MCF 10A (cell line): ENCODE measurements at regions of chr10 and their contacts with region 1.

Region 1: DNA sequence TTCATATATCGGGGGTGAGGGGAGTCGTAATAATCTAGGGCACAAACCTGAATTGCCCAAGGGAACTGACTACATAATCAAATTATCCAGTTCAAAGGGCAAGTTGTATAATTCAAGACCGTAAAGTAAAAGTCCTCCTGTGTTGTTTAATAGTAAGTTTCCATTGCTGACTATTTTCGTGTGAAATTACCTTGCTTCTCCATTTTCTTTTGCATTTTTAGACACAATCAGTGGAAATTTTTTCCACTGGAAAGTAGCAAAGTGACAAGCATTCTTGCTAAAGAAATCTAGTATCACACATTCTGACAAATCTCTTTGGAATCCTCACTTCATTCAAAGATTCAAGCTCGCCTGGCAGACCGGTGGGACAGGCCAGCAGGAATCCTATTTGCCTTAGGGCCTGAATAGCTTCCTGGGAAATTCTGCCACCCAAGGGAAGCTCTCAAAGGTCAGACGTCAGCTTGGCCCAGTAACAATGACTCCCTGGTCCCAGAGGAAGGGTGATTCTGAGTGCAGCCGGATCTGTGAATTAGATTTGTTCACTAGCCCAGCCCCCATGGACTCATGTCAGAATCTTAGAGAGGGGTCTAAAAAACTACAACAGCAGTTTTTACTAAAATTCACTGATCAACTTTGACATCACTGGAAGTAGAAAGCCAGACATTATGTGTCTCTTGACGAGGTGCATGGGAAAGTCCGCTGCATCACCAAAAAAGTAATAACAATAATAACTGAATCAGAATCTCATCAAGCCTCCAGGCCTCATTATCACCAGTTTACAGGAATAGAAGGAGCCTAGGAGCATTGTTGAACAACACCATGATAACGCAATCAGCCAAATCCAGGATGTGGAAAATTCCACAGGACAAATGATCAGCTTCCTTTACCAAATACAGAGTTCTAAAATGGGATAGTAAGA is 161.0 kb downstream of the SKIDA1 start:
- DNase-seq: peak; percentile 94
- H3K4me3 Mint-ChIP-seq: peak overlapping the region; percentile 60
- H3K27ac Mint-ChIP-seq: peak overlapping the region; percentile 92
- H3K4me1 Mint-ChIP-seq: peaks cover 50% of the 10 kb centered on the region
- H3K27me3 Mint-ChIP-seq: no peaks in the 10 kb centered on the region
- CTCF ChIP-seq: no peak

Region 2: GRCh38 chr10:21292763-21293517 is 71.5 kb before region 1 on chr10:
- CTCF ChIA-PET with region 1: interaction called, 6 read pairs
- POLR2A ChIA-PET with region 1: interaction called, 6 read pairs
- intact Hi-C with region 1: loop called (anchors 5 kb)
- DNase-seq: peak; percentile 96
- H3K4me3 Mint-ChIP-seq: peak overlapping the region; percentile 63
- H3K27ac Mint-ChIP-seq: peak overlapping the region; percentile 66
- H3K4me1 Mint-ChIP-seq: peaks cover 23% of the 10 kb centered on the region
- H3K27me3 Mint-ChIP-seq: no peaks in the 10 kb centered on the region
- CTCF ChIP-seq: no peak

Region 3: DNA sequence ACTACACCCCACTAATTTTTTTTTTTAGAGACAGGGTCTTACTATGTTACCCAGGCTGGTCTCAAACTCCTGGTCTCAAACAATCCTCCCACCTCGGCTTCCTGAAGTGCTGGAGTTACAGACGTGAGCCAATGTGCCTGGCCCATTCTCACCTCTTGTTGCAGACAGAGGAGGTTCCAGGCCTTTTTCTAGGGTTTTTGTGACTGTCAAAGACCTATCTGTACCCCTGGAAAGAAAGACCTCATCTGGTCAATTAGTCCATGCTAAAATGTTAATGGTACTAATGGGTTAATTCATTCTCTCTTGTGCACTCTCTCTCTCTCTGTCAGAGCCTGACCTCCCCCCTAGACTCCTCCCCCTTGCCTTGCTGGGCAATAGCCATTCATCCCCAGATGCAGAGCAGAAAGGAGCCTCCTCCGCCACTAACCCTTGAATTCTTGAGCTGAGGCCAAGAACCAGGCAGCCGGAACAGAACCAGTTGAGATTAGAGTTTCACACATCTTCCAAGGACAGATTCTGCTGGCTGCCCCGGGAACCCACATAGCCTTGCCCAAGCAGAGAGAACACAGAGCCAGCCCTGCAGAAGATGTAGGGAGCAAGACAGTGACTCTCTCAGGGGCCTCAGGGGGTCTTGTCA is 48.7 kb before region 1 on chr10:
- CTCF ChIA-PET with region 1: no interaction called
- POLR2A ChIA-PET with region 1: interaction called, 17 read pairs
- intact Hi-C with region 1: no loop called
- DNase-seq: peak; percentile 94
- H3K4me3 Mint-ChIP-seq: peak overlapping the region; percentile 6
- H3K27ac Mint-ChIP-seq: peak overlapping the region; percentile 61
- H3K4me1 Mint-ChIP-seq: peaks cover 31% of the 10 kb centered on the region
- H3K27me3 Mint-ChIP-seq: no peaks in the 10 kb centered on the region
- CTCF ChIP-seq: no peak